ENCODE measurements at regions of chr11 and their contacts with region 1.

Region 1: GRCh38 chr11:116787786-116788486 is at the start of gene ZPR1:
- DNase-seq: peak; percentile 96
- H3K4me3 ChIP-seq: peak within 1 kb of the TSS; percentile 75 to 93
- H3K27ac ChIP-seq: peak within 1 kb of the TSS; percentile 58 to 70
- H3K4me1 ChIP-seq: peaks cover 5 to 20% of the 10 kb centered on the region in 2 experiments; a peak in 3 of 4 replicates
- H3K27me3 ChIP-seq: no peaks in the 10 kb centered on the region
- CTCF ChIP-seq: no peak
- EP300 ChIP-seq: no peak
- RAD21 ChIP-seq: no peak
- polyA plus RNA-seq, gene ZPR1: 52.4 and 69.2 TPM in 2 replicates

Region 2: DNA sequence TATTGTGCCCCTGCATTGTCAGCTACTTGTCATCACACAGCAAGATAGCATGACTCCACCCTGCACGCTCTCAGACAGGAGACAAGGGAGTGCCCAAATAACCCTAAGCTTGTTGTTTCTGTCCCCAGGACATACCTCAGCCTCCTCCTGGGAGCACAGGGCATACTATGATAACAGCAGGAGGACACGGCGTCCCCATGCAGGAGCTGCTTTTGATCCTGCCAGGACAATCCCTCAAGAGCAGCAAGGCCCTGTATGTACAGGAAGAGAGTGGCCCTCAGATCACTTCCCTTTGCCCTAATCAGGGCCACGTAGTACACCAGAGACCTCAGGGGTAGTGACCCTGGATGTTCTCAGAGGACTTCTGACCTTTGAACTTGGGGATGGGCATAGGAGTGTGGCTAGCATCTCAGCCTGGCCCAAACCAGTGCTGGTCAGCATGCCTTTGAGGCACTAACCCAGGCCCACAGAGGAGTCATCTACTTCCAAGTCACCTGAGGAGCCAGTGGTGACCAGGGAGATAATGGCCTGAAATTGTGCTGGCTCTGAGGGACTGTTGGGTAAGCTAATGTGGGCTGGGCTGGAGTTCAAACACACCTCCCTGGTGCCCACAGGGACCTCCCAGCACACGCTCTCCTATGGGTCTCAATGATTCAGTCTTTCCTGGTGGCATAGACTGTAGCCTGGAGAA is 26.0 kb after region 1 on chr11:
- CTCF ChIA-PET with region 1: interaction called, 16 read pairs
- POLR2A ChIA-PET with region 1: no interaction called
- DNase-seq: no peak
- H3K4me3 ChIP-seq: no peak overlapping the region
- H3K27ac ChIP-seq: no peak overlapping the region
- H3K4me1 ChIP-seq: no peaks in the 10 kb centered on the region
- H3K27me3 ChIP-seq: no peaks in the 10 kb centered on the region
- CTCF ChIP-seq: no peak
- EP300 ChIP-seq: no peak
- RAD21 ChIP-seq: no peak

Region 3: DNA sequence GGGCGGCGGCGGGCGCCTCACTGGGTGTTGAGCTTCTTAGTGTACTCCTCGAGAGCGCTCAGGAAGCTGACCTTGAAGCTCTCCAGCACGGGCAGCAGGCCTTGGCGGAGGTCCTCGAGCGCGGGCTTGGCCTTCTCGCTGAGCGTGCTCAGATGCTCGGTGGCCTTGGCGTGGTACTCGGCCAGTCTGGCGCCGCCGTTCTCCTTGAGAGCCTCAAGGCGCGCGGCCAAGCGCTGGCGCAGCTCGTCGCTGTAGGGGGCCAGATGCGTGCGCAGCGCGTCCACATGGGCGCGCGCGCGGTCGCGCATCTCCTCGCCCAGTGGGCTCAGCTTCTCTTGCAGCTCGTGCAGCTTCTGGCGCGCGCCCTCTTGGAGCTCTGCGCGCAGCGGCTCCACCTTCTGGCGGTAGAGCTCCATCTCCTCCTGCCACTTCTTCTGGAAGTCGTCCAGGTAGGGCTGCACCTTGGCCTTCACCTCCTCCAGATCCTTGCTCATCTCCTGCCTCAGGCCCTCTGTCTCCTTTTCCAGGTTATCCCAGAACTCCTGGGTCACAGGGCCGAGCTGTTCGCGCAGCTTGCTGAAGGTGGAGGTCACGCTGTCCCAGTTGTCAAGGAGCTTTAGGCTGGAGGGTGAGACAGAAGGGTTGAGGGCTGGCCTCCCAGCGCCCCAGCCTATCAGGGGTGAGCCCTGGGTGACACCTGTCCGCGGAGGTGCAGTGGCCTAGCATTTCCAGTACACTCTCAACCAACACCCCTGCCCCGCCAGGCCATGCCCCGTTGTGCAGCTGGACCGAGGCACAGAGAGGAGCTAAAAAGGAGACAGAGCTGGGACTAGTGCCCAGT is 48.1 kb after region 1 on chr11:
- CTCF ChIA-PET with region 1: interaction called, 59 read pairs
- POLR2A ChIA-PET with region 1: interaction called, 9 read pairs
- DNase-seq: peak; percentile 84
- H3K4me3 ChIP-seq: peak overlapping the region in 1 of 2 experiments; percentile 23; a peak in 1 of 4 replicates
- H3K27ac ChIP-seq: no peak overlapping the region
- H3K4me1 ChIP-seq: peaks cover 0 to 14% of the 10 kb centered on the region in 2 experiments; a peak in 1 of 4 replicates
- H3K27me3 ChIP-seq: no peaks in the 10 kb centered on the region
- CTCF ChIP-seq: peak; percentile 55
- EP300 ChIP-seq: no peak
- RAD21 ChIP-seq: peak; percentile 56

Region 4: GRCh38 chr11:116879800-116880625 is 92.1 kb after region 1 on chr11:
- CTCF ChIA-PET with region 1: interaction called, 25 read pairs
- POLR2A ChIA-PET with region 1: no interaction called
- DNase-seq: peak; percentile 58
- H3K4me3 ChIP-seq: no peak overlapping the region; a peak in 1 of 4 replicates
- H3K27ac ChIP-seq: no peak overlapping the region; a peak in 1 of 4 replicates
- H3K4me1 ChIP-seq: no peaks in the 10 kb centered on the region; a peak in 2 of 4 replicates
- H3K27me3 ChIP-seq: no peaks in the 10 kb centered on the region
- CTCF ChIP-seq: peak; percentile 86
- EP300 ChIP-seq: no peak
- RAD21 ChIP-seq: peak; percentile 86

Region 5: DNA sequence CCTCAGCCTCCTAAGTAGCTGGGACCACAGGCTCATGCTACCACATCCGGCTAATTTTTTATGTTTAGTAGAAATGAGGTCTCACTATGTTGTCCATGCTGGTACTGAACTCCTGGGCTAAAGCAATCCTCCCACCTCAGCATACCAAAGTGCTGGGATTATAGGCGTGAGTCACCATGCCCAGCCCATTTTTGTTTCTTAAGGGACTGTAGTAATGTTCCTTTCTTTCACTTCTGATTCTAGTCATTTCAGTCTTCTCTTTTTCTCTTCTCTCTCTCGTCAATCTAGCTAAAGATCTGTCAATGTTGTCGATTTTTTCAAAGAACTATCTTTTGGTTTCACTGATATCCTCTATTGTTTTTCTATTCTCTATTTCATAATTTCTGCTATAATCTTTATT is 160.5 kb after region 1 on chr11:
- CTCF ChIA-PET with region 1: no interaction called
- POLR2A ChIA-PET with region 1: no interaction called
- DNase-seq: no peak
- H3K4me3 ChIP-seq: no peak overlapping the region
- H3K27ac ChIP-seq: no peak overlapping the region
- H3K4me1 ChIP-seq: no peaks in the 10 kb centered on the region
- H3K27me3 ChIP-seq: no peaks in the 10 kb centered on the region
- CTCF ChIP-seq: no peak
- EP300 ChIP-seq: no peak
- RAD21 ChIP-seq: no peak